ENCODE measurements at regions of chr5 and their contacts with region 1.

Region 1: GRCh38 chr5:95620030-95620869 is at the start of gene GPR150:
- DNase-seq: peak; percentile 78
- H3K4me3 Mint-ChIP-seq: peak within 1 kb of the TSS; percentile 80
- H3K27ac Mint-ChIP-seq: peak within 1 kb of the TSS; percentile 66
- H3K4me1 Mint-ChIP-seq: peaks cover 55% of the 10 kb centered on the region
- H3K27me3 Mint-ChIP-seq: no peaks in the 10 kb centered on the region
- total RNA-seq, gene GPR150: 0.50 to 0.82 TPM

Region 2: GRCh38 chr5:95283761-95284415 is 336.4 kb before region 1 on chr5:
- CTCF ChIA-PET with region 1: no interaction called
- POLR2A ChIA-PET with region 1: no interaction called
- intact Hi-C with region 1: loop called (anchors 10 kb)
- DNase-seq: peak; percentile 24
- H3K4me3 Mint-ChIP-seq: no peak overlapping the region
- H3K27ac Mint-ChIP-seq: no peak overlapping the region
- H3K4me1 Mint-ChIP-seq: peaks cover 9% of the 10 kb centered on the region
- H3K27me3 Mint-ChIP-seq: peaks cover 36% of the 10 kb centered on the region

Region 3: GRCh38 chr5:95631991-95632675 is 11.9 kb after region 1 on chr5:
- CTCF ChIA-PET with region 1: interaction called, 16 read pairs
- POLR2A ChIA-PET with region 1: interaction called, 9 read pairs
- intact Hi-C with region 1: loop called (anchors 1 kb)
- DNase-seq: peak; percentile 86
- H3K4me3 Mint-ChIP-seq: peak overlapping the region; percentile 51
- H3K27ac Mint-ChIP-seq: peak overlapping the region; percentile 91
- H3K4me1 Mint-ChIP-seq: peaks cover 22% of the 10 kb centered on the region
- H3K27me3 Mint-ChIP-seq: no peaks in the 10 kb centered on the region

Measured in activated CD4-positive, alpha-beta memory T cell treated with anti-CD3 and anti-CD28 coated beads for 36 hours (primary cell).